B cell (primary cell): ENCODE measurements at regions of chr19 and their contacts with region 1.

Region 1: GRCh38 chr19:3700221-3701032 is at the start of gene PIP5K1C:
- DNase-seq: peak; percentile 95
- ATAC-seq: peak; percentile 99
- H3K4me3 ChIP-seq: peak within 1 kb of the TSS; percentile 41 to 72 (median 70)
- H3K4me3 Mint-ChIP-seq: peak within 1 kb of the TSS; percentile 91
- H3K27ac ChIP-seq: peak within 1 kb of the TSS in 1 of 2 donors; percentile 42
- H3K27ac Mint-ChIP-seq: peak within 1 kb of the TSS; percentile 80
- H3K4me1 ChIP-seq: peaks cover 16 to 23% of the 10 kb centered on the region in 2 donors
- H3K4me1 Mint-ChIP-seq: peaks cover 28% of the 10 kb centered on the region
- H3K27me3 ChIP-seq: no peaks in the 10 kb centered on the region
- H3K27me3 Mint-ChIP-seq: peaks cover 2% of the 10 kb centered on the region
- CTCF ChIP-seq: peak; percentile 74
- total RNA-seq, gene PIP5K1C: 42.3 and 46.7 TPM in 2 replicates

Region 2: DNA sequence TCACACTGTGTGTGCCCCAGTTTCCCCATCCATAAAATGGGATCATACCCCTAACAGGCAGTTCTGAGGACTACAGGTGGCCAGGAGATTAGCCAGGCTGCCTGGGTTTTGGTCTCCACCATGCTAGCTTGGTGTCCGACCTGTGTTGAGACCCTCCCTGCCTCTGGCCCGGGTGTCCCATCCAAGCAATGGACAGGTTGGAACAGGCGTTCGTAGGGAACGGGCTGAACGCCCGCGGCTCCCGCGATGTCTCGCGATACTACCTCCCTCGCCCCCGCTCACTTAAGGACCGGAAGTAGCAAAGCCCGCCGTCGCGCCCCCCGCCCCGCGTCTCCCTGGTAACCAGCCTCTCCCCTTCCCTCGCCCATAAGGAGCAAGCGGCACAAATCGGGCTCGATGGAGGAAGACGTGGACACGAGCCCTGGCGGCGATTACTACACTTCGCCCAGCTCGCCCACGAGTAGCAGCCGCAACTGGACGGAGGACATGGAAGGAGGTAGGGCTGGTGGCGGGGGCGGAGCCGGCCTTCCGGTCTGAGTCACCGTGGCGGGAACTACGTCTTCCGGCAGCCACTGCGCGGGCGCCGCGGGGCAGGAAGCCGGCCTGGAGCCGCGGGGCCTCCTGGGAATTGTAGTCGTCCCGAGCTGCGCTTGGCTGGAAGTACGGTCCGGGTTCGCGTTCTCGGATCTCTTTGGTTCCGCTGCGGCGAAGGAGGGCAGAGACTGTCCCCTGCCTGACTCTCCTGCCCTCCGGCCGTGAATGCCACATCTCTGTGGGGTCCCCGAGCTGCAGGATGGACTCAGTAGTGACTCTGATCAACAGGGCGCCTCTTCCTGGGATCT is 265.5 kb before region 1 on chr19:
- CTCF ChIA-PET with region 1: no interaction called
- POLR2A ChIA-PET with region 1: no interaction called
- intact Hi-C with region 1: no loop called
- DNase-seq: peak; percentile 99
- ATAC-seq: peak; percentile 92
- H3K4me3 ChIP-seq: peak overlapping the region; percentile 55 to 89 (median 78)
- H3K4me3 Mint-ChIP-seq: peak overlapping the region; percentile 100
- H3K27ac ChIP-seq: peak overlapping the region; percentile 87 to 96
- H3K27ac Mint-ChIP-seq: peak overlapping the region; percentile 99
- H3K4me1 ChIP-seq: peaks cover 9 to 15% of the 10 kb centered on the region in 2 donors
- H3K4me1 Mint-ChIP-seq: peaks cover 13% of the 10 kb centered on the region
- H3K27me3 ChIP-seq: no peaks in the 10 kb centered on the region
- H3K27me3 Mint-ChIP-seq: no peaks in the 10 kb centered on the region
- CTCF ChIP-seq: no peak

Region 3: GRCh38 chr19:3626473-3627350 is 73.7 kb before region 1 on chr19 and contains the start of gene CACTIN:
- CTCF ChIA-PET with region 1: no interaction called
- POLR2A ChIA-PET with region 1: no interaction called
- intact Hi-C with region 1: no loop called
- DNase-seq: peak; percentile 99
- ATAC-seq: peak; percentile 98
- H3K4me3 ChIP-seq: peak within 1 kb of the TSS; percentile 70 to 98 (median 76)
- H3K4me3 Mint-ChIP-seq: peak within 1 kb of the TSS; percentile 96
- H3K27ac ChIP-seq: peak within 1 kb of the TSS; percentile 96 to 98
- H3K27ac Mint-ChIP-seq: peak within 1 kb of the TSS; percentile 100
- H3K4me1 ChIP-seq: peaks cover 17 to 21% of the 10 kb centered on the region in 2 donors
- H3K4me1 Mint-ChIP-seq: peaks cover 26% of the 10 kb centered on the region
- H3K27me3 ChIP-seq: no peaks in the 10 kb centered on the region
- H3K27me3 Mint-ChIP-seq: no peaks in the 10 kb centered on the region
- CTCF ChIP-seq: no peak
- total RNA-seq, gene CACTIN: 41.8 and 48.0 TPM in 2 replicates

Region 4: GRCh38 chr19:3665681-3666544 is 34.5 kb before region 1 on chr19:
- CTCF ChIA-PET with region 1: interaction called, 110 read pairs
- POLR2A ChIA-PET with region 1: no interaction called
- intact Hi-C with region 1: loop called (anchors 1 kb)
- DNase-seq: peak; percentile 82
- ATAC-seq: peak; percentile 89
- H3K4me3 ChIP-seq: peak overlapping the region in 4 of 5 experiments; percentile 12 to 50 (median 32)
- H3K4me3 Mint-ChIP-seq: peak overlapping the region; percentile 74
- H3K27ac ChIP-seq: peak overlapping the region in 1 of 2 donors; percentile 55
- H3K27ac Mint-ChIP-seq: peak overlapping the region; percentile 65
- H3K4me1 ChIP-seq: peaks cover 23 to 28% of the 10 kb centered on the region in 2 donors
- H3K4me1 Mint-ChIP-seq: peaks cover 38% of the 10 kb centered on the region
- H3K27me3 ChIP-seq: peaks cover 0 to 4% (median 2%) of the 10 kb centered on the region in 4 experiments
- H3K27me3 Mint-ChIP-seq: no peaks in the 10 kb centered on the region
- CTCF ChIP-seq: peak; percentile 94